Endothelial cell of umbilical vein (primary cell): ENCODE measurements at regions of chr11 and their contacts with region 1.

Region 1: GRCh38 chr11:96464700-96465307 is 75.0 kb downstream of the JRKL start:
- DNase-seq: peak; percentile 64
- H3K4me3 ChIP-seq: no peak overlapping the region
- H3K27ac ChIP-seq: no peak overlapping the region
- H3K4me1 ChIP-seq: peaks cover 3% of the 10 kb centered on the region
- H3K27me3 ChIP-seq: no peaks in the 10 kb centered on the region
- CTCF ChIP-seq: peak; percentile 45 to 52
- POLR2A ChIP-seq: no peak

Region 2: GRCh38 chr11:96314326-96315020 is 150.3 kb before region 1 on chr11:
- CTCF ChIA-PET with region 1: no interaction called
- POLR2A ChIA-PET with region 1: no interaction called
- dilution Hi-C with region 1: no loop called
- intact Hi-C with region 1: no loop called
- DNase-seq: peak; percentile 65
- H3K4me3 ChIP-seq: peak overlapping the region in 1 of 3 experiments; percentile 9
- H3K27ac ChIP-seq: peak overlapping the region; percentile 95
- H3K4me1 ChIP-seq: peaks cover 72% of the 10 kb centered on the region
- H3K27me3 ChIP-seq: no peaks in the 10 kb centered on the region
- CTCF ChIP-seq: no peak
- POLR2A ChIP-seq: peak; percentile 55

Region 3: DNA sequence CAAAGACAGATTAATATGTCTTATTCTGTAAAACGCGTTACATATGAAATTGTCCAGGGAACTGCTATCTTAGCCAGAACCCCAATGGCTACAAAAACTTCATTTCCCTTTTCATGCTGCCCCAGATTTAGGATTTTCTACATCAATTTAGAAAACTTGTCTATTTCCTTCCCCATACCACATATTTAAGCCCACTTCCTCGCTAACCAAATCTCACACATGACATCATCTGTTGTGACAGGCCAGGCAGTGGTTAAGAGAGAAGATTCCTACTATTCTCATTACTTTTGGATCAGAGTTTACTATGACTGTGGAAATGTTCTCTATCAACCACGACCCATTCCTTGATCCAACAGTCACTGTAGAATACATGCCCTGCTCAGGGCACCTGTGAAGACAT is 91.0 kb before region 1 on chr11:
- CTCF ChIA-PET with region 1: no interaction called
- POLR2A ChIA-PET with region 1: no interaction called
- dilution Hi-C with region 1: no loop called
- intact Hi-C with region 1: no loop called
- DNase-seq: no peak
- H3K4me3 ChIP-seq: no peak overlapping the region
- H3K27ac ChIP-seq: no peak overlapping the region
- H3K4me1 ChIP-seq: no peaks in the 10 kb centered on the region
- H3K27me3 ChIP-seq: no peaks in the 10 kb centered on the region
- CTCF ChIP-seq: no peak
- POLR2A ChIP-seq: no peak

Region 4: DNA sequence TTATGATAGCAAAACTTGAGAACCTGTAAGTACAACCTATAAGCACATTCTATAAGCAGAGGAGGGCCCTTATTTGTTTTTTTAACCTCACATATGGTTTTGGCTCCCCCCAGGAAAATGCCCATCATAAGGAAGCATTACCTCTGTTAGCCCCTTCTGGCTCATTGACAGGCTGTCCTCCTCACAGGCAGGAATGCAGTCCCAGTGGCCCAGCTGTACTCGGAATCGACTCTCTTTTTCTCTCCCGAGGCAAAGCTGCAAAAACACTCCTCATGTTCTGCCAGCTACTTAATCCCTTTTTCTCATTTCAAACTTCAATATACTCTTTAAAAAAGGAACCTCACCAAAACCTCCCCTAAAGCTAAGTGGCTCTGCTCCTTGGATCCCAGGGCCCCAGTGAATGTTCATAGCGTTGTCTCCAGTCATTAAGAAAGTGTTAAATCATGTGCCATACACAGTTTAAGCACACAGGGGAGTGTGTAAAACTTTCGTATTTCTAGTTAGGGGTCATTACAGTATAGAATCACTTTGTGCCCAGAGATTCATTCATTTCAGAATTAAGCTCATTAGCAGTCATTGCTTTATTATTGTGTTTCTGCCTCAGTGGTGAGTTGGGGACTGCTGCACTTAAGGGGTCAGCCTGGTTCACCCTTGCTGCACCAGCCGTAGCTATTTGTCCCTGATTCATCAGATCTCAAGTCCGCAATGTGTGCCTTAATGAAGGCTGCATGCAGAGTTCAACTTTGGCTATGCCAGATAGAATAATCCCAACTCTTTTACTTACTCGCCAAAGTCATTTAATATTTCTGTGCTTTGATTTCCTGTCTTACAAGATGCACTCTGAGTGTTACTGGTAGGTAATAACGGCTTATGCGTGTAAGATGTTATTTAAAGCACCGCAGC is 17.3 kb before region 1 on chr11:
- CTCF ChIA-PET with region 1: interaction called, 19 read pairs
- POLR2A ChIA-PET with region 1: no interaction called
- dilution Hi-C with region 1: no loop called
- intact Hi-C with region 1: no loop called
- DNase-seq: no peak
- H3K4me3 ChIP-seq: no peak overlapping the region
- H3K27ac ChIP-seq: no peak overlapping the region
- H3K4me1 ChIP-seq: no peaks in the 10 kb centered on the region
- H3K27me3 ChIP-seq: peaks cover 2 to 18% of the 10 kb centered on the region in 2 experiments
- CTCF ChIP-seq: no peak
- POLR2A ChIP-seq: no peak

Region 5: DNA sequence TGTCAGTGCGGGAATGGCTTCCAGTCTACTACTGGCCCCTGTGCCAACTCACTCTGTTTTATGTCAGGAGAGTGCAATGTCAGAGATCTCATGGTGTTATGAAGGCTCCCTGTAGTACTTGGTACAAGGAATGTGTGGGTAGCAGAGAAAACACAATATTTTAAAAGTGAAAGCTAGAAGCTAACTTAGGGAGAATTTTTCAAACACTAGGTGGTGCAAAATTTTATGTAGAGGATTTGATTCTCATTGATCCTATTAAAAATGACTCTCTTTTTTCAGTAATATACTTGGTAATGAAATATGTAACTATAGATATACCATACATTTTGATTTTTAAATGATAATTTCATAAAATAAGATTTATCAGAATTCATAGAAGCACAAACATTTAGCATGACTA is 59.7 kb after region 1 on chr11:
- CTCF ChIA-PET with region 1: interaction called, 14 read pairs
- POLR2A ChIA-PET with region 1: no interaction called
- dilution Hi-C with region 1: no loop called
- intact Hi-C with region 1: no loop called
- DNase-seq: no peak
- H3K4me3 ChIP-seq: no peak overlapping the region
- H3K27ac ChIP-seq: no peak overlapping the region
- H3K4me1 ChIP-seq: no peaks in the 10 kb centered on the region
- H3K27me3 ChIP-seq: no peaks in the 10 kb centered on the region
- CTCF ChIP-seq: no peak
- POLR2A ChIP-seq: no peak

Region 6: DNA sequence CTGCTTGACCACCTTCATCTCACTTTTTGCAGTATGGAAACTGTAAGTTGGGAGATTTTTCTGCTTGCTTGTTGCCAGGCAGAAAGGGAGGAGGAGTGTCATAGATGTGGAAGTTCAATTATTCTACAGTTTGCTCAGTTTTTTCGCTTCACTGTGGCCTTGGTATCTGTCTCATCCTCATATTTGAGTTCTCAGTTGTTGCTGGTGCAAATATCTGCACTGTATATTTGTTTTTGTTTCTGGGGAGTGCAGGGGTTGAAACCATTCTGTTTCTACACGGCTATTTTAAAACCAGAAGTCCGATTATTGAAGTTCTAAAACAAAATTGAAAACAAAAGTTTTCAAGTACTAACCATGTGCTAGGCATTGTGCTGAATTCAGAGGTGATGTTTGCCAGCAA is 78.4 kb after region 1 on chr11:
- CTCF ChIA-PET with region 1: no interaction called
- POLR2A ChIA-PET with region 1: no interaction called
- dilution Hi-C with region 1: no loop called
- intact Hi-C with region 1: no loop called
- DNase-seq: no peak
- H3K4me3 ChIP-seq: no peak overlapping the region
- H3K27ac ChIP-seq: no peak overlapping the region
- H3K4me1 ChIP-seq: no peaks in the 10 kb centered on the region
- H3K27me3 ChIP-seq: peaks cover 0 to 1% of the 10 kb centered on the region in 2 experiments
- CTCF ChIP-seq: no peak
- POLR2A ChIP-seq: no peak

Region 7: DNA sequence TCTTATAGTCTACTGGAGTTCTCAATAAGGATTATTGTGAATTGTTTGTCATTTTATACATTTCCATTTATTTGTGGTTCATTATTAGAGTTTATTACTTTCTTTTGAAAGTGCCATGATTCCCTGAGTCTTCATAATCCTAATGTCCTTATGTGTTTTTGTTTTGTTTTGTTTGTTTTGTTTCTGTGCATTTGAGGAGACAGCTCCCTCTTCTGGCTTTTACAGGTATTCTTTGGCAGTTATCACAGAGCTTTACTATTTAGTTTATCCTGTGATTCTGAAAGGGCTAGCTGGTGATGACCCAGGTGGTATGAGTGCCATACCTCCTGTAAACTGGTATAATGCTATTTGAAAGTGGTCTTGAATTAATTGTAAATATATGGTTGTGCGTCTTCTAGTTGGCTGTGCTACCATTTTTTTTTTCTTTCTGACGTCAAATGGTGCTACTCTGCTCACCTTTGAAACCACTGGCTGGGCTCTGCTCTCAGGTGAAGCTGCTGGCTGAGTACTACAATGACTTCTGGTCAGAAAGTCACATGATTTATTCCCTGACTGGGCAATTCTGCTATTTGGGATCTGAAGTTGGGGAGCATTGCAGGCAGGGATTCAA is 676.2 kb after region 1 on chr11:
- CTCF ChIA-PET with region 1: interaction called, 51 read pairs
- POLR2A ChIA-PET with region 1: no interaction called
- dilution Hi-C with region 1: no loop called
- intact Hi-C with region 1: loop called (anchors 1 kb)
- DNase-seq: no peak
- H3K4me3 ChIP-seq: no peak overlapping the region
- H3K27ac ChIP-seq: no peak overlapping the region
- H3K4me1 ChIP-seq: no peaks in the 10 kb centered on the region
- H3K27me3 ChIP-seq: no peaks in the 10 kb centered on the region
- CTCF ChIP-seq: peak; percentile 3 to 14
- POLR2A ChIP-seq: no peak

Region 8: GRCh38 chr11:97610000-97610399 is 1145.2 kb after region 1 on chr11:
- CTCF ChIA-PET with region 1: interaction called, 4 read pairs
- POLR2A ChIA-PET with region 1: no interaction called
- dilution Hi-C with region 1: no loop called
- intact Hi-C with region 1: loop called (anchors 10 kb)
- DNase-seq: no peak
- H3K4me3 ChIP-seq: no peak overlapping the region
- H3K27ac ChIP-seq: no peak overlapping the region
- H3K4me1 ChIP-seq: peaks cover 6% of the 10 kb centered on the region
- H3K27me3 ChIP-seq: no peaks in the 10 kb centered on the region
- CTCF ChIP-seq: peak in 1 of 2 donors; percentile 14
- POLR2A ChIP-seq: no peak